K562 (cell line): ENCODE measurements at regions of chr2 and their contacts with region 1.

Region 1: GRCh38 chr2:6896930-6897759 is 19.6 kb downstream of the RSAD2 start:
- DNase-seq: peak in 3 of 4 experiments; percentile 36 to 67 (median 39)
- ATAC-seq: peak; percentile 63
- H3K4me3 ChIP-seq: no peak overlapping the region
- H3K27ac ChIP-seq: no peak overlapping the region
- H3K4me1 ChIP-seq: peaks cover 4 to 13% of the 10 kb centered on the region in 2 experiments; a peak in 4 of 5 replicates
- H3K27me3 ChIP-seq: no peaks in the 10 kb centered on the region
- CTCF ChIP-seq: peak; percentile 48 to 87 (median 64); a peak in 5 of 6 replicates
- EP300 ChIP-seq: no peak
- POLR2A ChIP-seq: no peak
- RAD21 ChIP-seq: peak; percentile 84 to 90

Region 2: GRCh38 chr2:6845312-6845711 is 51.8 kb before region 1 on chr2:
- CTCF ChIA-PET with region 1: no interaction called
- POLR2A ChIA-PET with region 1: no interaction called
- in situ Hi-C with region 1: loop called (anchors 5 kb)
- intact Hi-C with region 1: loop called (anchors 1 kb)
- DNase-seq: peak; percentile 41 to 70 (median 52)
- ATAC-seq: no peak
- H3K4me3 ChIP-seq: no peak overlapping the region
- H3K27ac ChIP-seq: no peak overlapping the region
- H3K4me1 ChIP-seq: peaks cover 5 to 13% of the 10 kb centered on the region in 2 experiments; a peak in 4 of 5 replicates
- H3K27me3 ChIP-seq: no peaks in the 10 kb centered on the region
- CTCF ChIP-seq: no peak
- EP300 ChIP-seq: no peak; the same call in 1 of the 2 replicates
- POLR2A ChIP-seq: no peak
- RAD21 ChIP-seq: no peak

Region 3: DNA sequence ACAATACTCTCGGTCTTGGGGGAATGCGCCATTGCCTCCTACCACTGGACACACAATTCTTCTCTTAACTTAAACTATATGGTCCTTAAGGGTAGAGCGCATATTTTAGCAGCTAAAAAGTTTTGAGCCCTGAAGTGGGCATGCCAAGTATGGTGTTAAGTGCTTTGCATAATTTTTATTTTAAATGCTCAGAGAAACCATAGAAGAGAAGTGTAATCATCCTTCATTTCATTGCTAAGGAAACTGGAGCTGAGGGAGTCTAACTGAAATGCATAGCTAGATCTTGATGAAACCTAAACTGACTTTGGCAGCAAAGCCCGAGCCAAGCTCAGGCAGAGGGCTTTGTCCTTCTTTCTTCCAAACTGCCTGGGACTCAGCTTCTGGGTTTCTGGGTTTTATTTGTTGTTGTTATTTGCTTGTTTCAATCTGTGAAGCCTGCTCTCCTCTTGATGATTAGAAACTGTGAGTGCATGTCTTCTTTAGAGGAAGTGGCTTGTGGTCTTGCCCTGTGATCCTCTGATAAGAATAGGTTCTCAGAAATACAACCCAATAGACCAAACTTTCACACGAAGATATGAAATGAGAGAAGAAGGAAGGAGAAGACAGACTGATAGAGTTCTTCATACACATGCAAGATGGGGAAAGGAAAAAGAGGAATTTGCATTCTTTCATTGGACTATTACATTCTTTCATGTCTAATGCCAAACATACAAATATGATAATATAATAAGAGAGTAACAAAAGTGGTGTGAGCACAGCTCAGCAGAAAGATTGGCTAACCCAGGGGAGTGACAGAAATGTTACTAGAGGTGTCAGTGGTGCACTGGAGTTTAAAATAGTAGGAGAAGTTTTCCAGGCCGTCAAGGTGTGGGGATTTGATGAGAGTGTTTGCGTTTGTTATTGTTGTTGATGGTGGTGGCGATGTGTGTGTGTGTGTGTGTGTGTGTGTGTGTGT is 12.6 kb after region 1 on chr2:
- CTCF ChIA-PET with region 1: no interaction called
- POLR2A ChIA-PET with region 1: interaction called, 11 read pairs
- in situ Hi-C with region 1: no loop called
- intact Hi-C with region 1: no loop called
- DNase-seq: peak in 3 of 4 experiments; percentile 30 to 82 (median 66)
- ATAC-seq: peak; percentile 94
- H3K4me3 ChIP-seq: no peak overlapping the region
- H3K27ac ChIP-seq: 0 out of 3 replicates have a peak overlapping the region, but pooled peaks have one; percentile 29
- H3K4me1 ChIP-seq: peaks cover 8 to 21% of the 10 kb centered on the region in 2 experiments; a peak in 4 of 5 replicates
- H3K27me3 ChIP-seq: 0 out of 5 replicates have a peak, but pooled peaks cover 0 to 4% of the 10 kb centered on the region in 2 experiments
- CTCF ChIP-seq: no peak
- EP300 ChIP-seq: peak; percentile 96
- POLR2A ChIP-seq: no peak
- RAD21 ChIP-seq: peak in 1 of 2 experiments; percentile 22; a peak in 1 of 4 replicates

Region 4: DNA sequence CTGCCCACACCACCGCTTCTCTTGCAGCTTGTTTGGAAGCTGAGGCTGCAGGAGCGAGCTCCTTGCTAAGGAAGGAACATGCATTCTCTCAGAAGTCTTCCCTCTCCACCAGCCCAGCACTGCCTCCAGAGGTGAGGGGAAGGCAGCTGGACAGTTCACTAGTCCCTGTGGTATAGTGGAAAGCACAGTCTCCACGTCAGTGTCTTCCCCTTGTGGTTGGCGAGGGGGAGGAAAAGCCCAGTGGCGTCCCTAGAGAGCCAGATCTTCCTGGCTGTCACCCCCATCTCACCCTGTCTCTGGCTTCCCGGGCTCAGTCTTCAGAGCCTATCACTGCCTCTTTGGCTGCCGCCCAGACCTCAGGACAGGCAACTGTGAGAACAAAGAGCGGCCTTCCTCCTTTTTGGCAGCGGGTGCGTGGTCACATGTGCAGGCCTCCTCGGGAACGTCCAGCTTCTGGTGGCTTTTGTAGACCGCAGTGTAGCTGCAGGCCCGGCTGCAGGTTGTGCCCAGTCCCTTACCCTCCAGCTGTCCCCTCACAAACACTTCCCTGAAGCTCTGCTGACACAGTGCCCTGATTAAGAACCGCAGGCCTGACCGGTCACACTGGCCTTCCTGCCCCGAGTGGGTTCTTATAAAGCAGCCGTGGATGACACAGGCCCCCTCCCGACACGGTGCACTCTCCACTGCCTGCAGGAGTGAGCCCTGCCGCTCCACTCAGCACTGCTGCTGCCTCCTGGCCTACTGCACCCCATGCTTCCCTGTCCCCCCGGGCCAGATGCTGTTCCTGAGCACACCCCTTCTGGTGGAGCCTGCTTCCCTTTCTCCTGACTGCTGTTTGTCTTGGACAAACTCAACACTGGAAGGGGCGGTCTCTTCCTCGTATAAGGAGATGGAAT is 110.9 kb after region 1 on chr2:
- CTCF ChIA-PET with region 1: no interaction called
- POLR2A ChIA-PET with region 1: no interaction called
- in situ Hi-C with region 1: no loop called
- intact Hi-C with region 1: loop called (anchors 5 kb)
- DNase-seq: peak; percentile 81 to 91 (median 86)
- ATAC-seq: peak; percentile 96
- H3K4me3 ChIP-seq: no peak overlapping the region
- H3K27ac ChIP-seq: no peak overlapping the region
- H3K4me1 ChIP-seq: peaks cover 14 to 20% of the 10 kb centered on the region in 2 experiments
- H3K27me3 ChIP-seq: no peaks in the 10 kb centered on the region
- CTCF ChIP-seq: peak; percentile 63 to 83 (median 79)
- EP300 ChIP-seq: peak; percentile 62
- POLR2A ChIP-seq: no peak
- RAD21 ChIP-seq: peak; percentile 66 to 69

Region 5: GRCh38 chr2:7044261-7045250 is 147.4 kb after region 1 on chr2:
- CTCF ChIA-PET with region 1: interaction called, 15 read pairs
- POLR2A ChIA-PET with region 1: no interaction called
- in situ Hi-C with region 1: no loop called
- intact Hi-C with region 1: loop called (anchors 1 kb)
- DNase-seq: peak; percentile 73 to 83 (median 79)
- ATAC-seq: peak; percentile 96
- H3K4me3 ChIP-seq: no peak overlapping the region
- H3K27ac ChIP-seq: no peak overlapping the region
- H3K4me1 ChIP-seq: no peaks in the 10 kb centered on the region; a peak in 1 of 5 replicates
- H3K27me3 ChIP-seq: peaks cover 0 to 4% of the 10 kb centered on the region in 2 experiments; a peak in 1 of 5 replicates
- CTCF ChIP-seq: peak; percentile 80 to 92 (median 81)
- EP300 ChIP-seq: no peak
- POLR2A ChIP-seq: no peak
- RAD21 ChIP-seq: peak; percentile 60 to 75; a peak in 3 of 4 replicates